SK-N-SH (cell line): ENCODE measurements at regions of chr11 and their contacts with region 1.

Region 1: DNA sequence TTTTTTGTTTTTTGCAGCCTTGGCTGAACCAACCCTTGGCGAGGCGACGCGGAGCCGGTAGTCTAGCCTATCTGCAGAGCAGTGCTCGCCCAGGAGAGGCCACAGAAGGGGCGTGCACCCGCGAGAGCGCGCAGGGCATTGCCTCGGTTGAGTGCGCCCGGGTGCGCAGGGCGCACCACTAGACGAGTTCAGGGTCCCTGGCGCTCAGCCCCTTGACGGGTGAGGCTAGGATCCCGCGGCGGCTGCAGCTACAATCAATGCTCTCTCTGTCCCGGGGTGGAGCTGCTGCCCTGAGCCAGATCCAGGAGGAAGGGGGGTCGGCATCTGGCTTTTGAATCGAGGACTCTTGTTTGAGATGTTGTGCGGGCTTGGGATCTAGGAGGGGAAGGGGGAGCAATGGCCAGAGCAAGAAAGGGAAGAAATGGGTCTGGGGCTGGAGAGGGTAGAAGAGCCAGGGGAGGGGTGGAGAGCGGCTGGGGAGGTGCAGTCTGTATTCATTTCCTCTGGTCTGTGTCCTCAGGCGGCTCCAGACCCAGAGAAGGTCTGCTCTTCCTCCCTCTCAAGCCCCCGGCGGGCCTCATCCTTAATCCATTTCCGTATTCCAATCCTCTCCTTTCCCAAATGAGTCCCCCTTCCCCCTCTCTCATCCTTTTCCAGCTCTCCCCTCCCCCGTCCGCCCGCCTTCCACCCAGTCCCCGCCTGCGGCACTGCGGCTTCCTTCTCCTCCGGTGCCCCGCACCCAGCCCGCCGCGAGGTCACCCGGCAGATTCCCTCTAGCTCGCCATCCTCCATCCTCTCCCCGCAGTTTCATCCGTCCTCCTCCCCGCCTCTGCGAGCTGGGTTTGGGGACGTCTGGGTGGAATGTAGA is 797 bp downstream of the THY1 start:
- DNase-seq: peak; percentile 79
- H3K4me3 ChIP-seq: peak overlapping the region; percentile 87 to 96
- H3K27ac ChIP-seq: peak overlapping the region; percentile 70 to 89
- H3K4me1 ChIP-seq: peaks cover 22 to 63% of the 10 kb centered on the region in 2 experiments
- H3K27me3 ChIP-seq: no peaks in the 10 kb centered on the region
- CTCF ChIP-seq: no peak
- EP300 ChIP-seq: no peak
- RAD21 ChIP-seq: no peak

Region 2: GRCh38 chr11:118988280-118988679 is 433.9 kb before region 1 on chr11:
- CTCF ChIA-PET with region 1: no interaction called
- POLR2A ChIA-PET with region 1: no interaction called
- DNase-seq: no peak
- H3K4me3 ChIP-seq: no peak overlapping the region
- H3K27ac ChIP-seq: no peak overlapping the region
- H3K4me1 ChIP-seq: no peaks in the 10 kb centered on the region
- H3K27me3 ChIP-seq: no peaks in the 10 kb centered on the region
- CTCF ChIP-seq: no peak
- EP300 ChIP-seq: no peak
- RAD21 ChIP-seq: no peak

Region 3: GRCh38 chr11:119295178-119295577 is 127.0 kb before region 1 on chr11:
- CTCF ChIA-PET with region 1: no interaction called
- POLR2A ChIA-PET with region 1: no interaction called
- DNase-seq: no peak
- H3K4me3 ChIP-seq: no peak overlapping the region
- H3K27ac ChIP-seq: no peak overlapping the region
- H3K4me1 ChIP-seq: peaks cover 0 to under 1% of the 10 kb centered on the region in 2 experiments; a peak in 2 of 4 replicates
- H3K27me3 ChIP-seq: no peaks in the 10 kb centered on the region
- CTCF ChIP-seq: peak; percentile 28; the same call in 1 of the 2 replicates
- EP300 ChIP-seq: no peak
- RAD21 ChIP-seq: no peak

Region 4: GRCh38 chr11:119373921-119374631 is 48.1 kb before region 1 on chr11:
- CTCF ChIA-PET with region 1: interaction called, 28 read pairs
- POLR2A ChIA-PET with region 1: interaction called, 7 read pairs
- DNase-seq: peak; percentile 84
- H3K4me3 ChIP-seq: peak overlapping the region in 1 of 2 experiments; percentile 27; a peak in 2 of 4 replicates
- H3K27ac ChIP-seq: peak overlapping the region in 1 of 2 experiments; percentile 98; a peak in 2 of 4 replicates
- H3K4me1 ChIP-seq: peaks cover 9 to 94% of the 10 kb centered on the region in 2 experiments
- H3K27me3 ChIP-seq: no peaks in the 10 kb centered on the region
- CTCF ChIP-seq: peak; percentile 88
- EP300 ChIP-seq: peak in 1 of 2 experiments; percentile 26; a peak in 1 of 4 replicates
- RAD21 ChIP-seq: peak; percentile 96

Region 5: DNA sequence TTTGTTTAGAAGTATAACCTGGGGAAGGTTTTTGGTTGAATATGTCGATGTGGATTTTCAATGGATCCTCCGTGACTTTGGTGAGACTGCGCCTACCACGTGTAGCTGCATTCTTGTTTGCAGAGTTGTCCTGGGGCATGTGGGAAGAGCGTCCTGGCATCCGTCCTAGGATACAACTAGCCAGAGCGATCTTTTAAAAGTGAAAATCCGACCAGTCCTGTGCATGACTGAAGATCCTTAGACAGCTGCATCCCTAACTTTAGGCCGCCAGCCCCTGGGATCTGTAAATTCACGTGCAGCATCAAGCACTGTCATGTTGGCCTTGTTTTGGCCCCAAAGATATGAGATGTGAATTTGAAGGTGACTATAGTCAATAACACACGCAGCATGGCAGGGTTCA is 23.2 kb after region 1 on chr11:
- CTCF ChIA-PET with region 1: no interaction called
- POLR2A ChIA-PET with region 1: no interaction called
- DNase-seq: no peak
- H3K4me3 ChIP-seq: no peak overlapping the region
- H3K27ac ChIP-seq: no peak overlapping the region
- H3K4me1 ChIP-seq: no peaks in the 10 kb centered on the region
- H3K27me3 ChIP-seq: no peaks in the 10 kb centered on the region
- CTCF ChIP-seq: no peak
- EP300 ChIP-seq: no peak
- RAD21 ChIP-seq: no peak